ENCODE measurements at regions of chr6 and their contacts with region 1.

Region 1: GRCh38 chr6:71190809-71191208 is 97.8 kb upstream of the OGFRL1 start:
- DNase-seq: no peak
- ATAC-seq: no peak
- H3K4me3 ChIP-seq: no peak overlapping the region
- H3K27ac ChIP-seq: no peak overlapping the region
- H3K4me1 ChIP-seq: no peaks in the 10 kb centered on the region
- H3K27me3 ChIP-seq: no peaks in the 10 kb centered on the region
- CTCF ChIP-seq: peak in 2 of 3 experiments; percentile 39 to 44; a peak in 3 of 6 replicates
- POLR2A ChIP-seq: no peak
- RAD21 ChIP-seq: peak; percentile 55

Region 2: GRCh38 chr6:71288228-71289001 is 97.6 kb after region 1 on chr6 and contains the start of gene OGFRL1:
- CTCF ChIA-PET with region 1: interaction called, 10 read pairs
- POLR2A ChIA-PET with region 1: no interaction called
- RAD21 ChIA-PET with region 1: no interaction called
- intact Hi-C with region 1: no loop called
- DNase-seq: no peak
- ATAC-seq: peak; percentile 95
- H3K4me3 ChIP-seq: peak within 1 kb of the TSS; percentile 65 to 75
- H3K27ac ChIP-seq: peak within 1 kb of the TSS; percentile 76; the same call in 1 of the 2 replicates
- H3K4me1 ChIP-seq: peaks cover 8 to 21% of the 10 kb centered on the region in 2 experiments; a peak in 2 of 4 replicates
- H3K27me3 ChIP-seq: no peaks in the 10 kb centered on the region
- CTCF ChIP-seq: no peak
- POLR2A ChIP-seq: peak; percentile 80
- RAD21 ChIP-seq: no peak
- total RNA-seq, gene OGFRL1: 10.3 TPM

Region 3: DNA sequence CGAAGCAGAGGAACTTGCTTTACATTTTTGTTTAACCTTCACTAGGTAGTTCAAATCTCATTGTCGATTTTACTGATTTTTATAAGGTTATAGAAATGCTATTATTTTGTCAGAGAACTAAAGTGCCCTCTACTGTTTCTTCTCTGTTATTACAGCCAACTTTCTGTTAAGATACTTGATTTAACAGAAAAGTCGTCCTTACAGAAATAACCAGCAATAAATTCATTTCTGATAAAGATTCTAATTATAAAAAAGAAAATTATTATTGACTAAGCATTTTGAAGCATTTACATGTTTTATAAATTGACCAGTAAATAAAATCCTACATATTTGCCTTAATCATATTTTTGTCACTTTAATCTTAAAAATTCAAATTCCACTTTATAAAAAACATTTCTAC is 158.6 kb after region 1 on chr6:
- CTCF ChIA-PET with region 1: interaction called, 17 read pairs
- POLR2A ChIA-PET with region 1: no interaction called
- RAD21 ChIA-PET with region 1: no interaction called
- intact Hi-C with region 1: loop called (anchors 1 kb)
- DNase-seq: peak; percentile 16
- ATAC-seq: no peak
- H3K4me3 ChIP-seq: no peak overlapping the region
- H3K27ac ChIP-seq: no peak overlapping the region
- H3K4me1 ChIP-seq: no peaks in the 10 kb centered on the region
- H3K27me3 ChIP-seq: peaks cover 12% of the 10 kb centered on the region; the same call in 1 of the 2 replicates
- CTCF ChIP-seq: peak; percentile 49 to 65 (median 51); a peak in 5 of 6 replicates
- POLR2A ChIP-seq: no peak
- RAD21 ChIP-seq: peak; percentile 61

Region 4: GRCh38 chr6:71420095-71420692 is 229.4 kb after region 1 on chr6:
- CTCF ChIA-PET with region 1: no interaction called
- POLR2A ChIA-PET with region 1: no interaction called
- RAD21 ChIA-PET with region 1: no interaction called
- intact Hi-C with region 1: no loop called
- DNase-seq: no peak
- ATAC-seq: no peak
- H3K4me3 ChIP-seq: no peak overlapping the region
- H3K27ac ChIP-seq: no peak overlapping the region
- H3K4me1 ChIP-seq: no peaks in the 10 kb centered on the region
- H3K27me3 ChIP-seq: no peaks in the 10 kb centered on the region
- CTCF ChIP-seq: no peak
- POLR2A ChIP-seq: no peak
- RAD21 ChIP-seq: no peak

Region 5: DNA sequence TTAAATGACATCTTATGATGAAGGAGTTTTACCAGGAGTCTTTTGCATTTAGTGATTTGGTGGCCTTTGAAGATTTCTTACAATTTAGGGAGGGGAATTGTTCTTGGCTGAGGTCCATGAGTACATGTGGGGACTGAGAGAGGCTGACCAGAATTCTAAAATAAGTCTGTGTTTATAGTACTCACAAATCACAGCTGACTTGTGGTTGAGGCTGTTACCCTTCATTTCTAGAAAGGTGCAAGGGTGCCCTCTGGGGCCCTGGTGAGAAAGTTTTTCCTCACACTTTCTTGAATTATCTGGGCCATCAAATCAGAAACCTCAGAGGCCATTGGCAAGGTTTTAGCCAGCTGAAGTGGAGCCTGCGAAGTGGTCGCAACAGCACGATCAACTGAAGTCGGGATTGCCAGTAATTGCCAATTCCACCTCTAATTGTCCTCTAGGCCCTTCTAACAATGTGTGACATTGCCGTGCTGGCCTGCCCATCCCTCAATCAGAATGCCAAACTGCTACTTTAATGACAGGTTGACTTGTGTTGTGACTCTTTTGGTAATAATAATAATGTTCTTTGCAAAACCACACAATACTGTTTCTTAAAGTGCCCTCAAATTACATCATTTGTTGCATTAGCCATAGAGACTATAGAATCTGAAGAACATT is 319.4 kb after region 1 on chr6:
- CTCF ChIA-PET with region 1: interaction called, 3 read pairs
- POLR2A ChIA-PET with region 1: no interaction called
- RAD21 ChIA-PET with region 1: no interaction called
- intact Hi-C with region 1: loop called (anchors 5 kb)
- DNase-seq: peak; percentile 27
- ATAC-seq: peak; percentile 57
- H3K4me3 ChIP-seq: no peak overlapping the region
- H3K27ac ChIP-seq: no peak overlapping the region
- H3K4me1 ChIP-seq: no peaks in the 10 kb centered on the region
- H3K27me3 ChIP-seq: no peaks in the 10 kb centered on the region
- CTCF ChIP-seq: peak; percentile 37 to 42 (median 41); a peak in 4 of 6 replicates
- POLR2A ChIP-seq: no peak
- RAD21 ChIP-seq: peak; percentile 67